ENCODE measurements at regions of chr3 and their contacts with region 1.

Region 1: DNA sequence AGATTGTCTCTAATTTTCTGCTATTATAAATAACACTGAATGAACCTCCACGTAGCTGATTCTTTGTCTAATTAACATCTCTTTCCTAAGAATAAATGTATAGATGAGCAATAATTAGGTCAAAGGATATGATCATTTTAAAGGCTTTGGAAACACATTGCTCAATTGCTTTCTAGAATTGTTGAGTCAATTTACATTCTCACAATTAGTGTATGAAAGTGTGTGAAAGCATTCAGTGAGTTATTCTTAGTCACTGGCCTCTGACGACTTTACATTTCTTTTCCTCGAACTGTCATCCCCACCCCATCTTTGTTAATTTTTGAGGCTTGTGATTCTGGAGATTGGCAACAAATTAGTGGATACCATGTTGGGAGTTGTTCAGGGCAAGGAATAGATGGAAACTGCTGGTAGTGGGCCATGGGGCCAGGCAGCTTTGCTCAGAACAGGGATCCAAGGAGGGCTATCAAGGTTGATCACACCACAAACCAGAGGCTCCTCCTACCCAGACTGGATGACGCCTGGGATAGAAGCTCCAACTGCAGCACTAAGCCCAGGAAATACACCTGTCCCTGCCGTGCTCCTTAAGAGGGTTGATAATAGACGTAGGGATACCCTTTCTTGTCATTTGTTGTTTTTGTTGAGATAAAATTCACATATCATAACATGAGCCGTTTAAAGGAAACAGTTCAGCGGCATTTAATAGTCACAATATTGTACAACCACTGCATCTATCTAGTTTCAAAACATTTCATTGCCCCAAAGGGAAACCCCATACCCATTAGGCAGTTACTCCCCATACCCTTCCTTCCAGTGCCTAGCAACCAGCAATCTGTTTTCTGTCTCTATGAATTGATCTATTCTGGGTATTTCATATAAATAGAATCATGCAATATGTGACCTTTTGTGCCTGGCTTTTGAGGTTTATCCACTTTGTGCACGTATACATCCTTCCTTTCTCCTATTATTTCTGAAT is 27.9 kb downstream of the EIF1B start:
- DNase-seq: no peak
- ATAC-seq: no peak
- H3K4me3 ChIP-seq: no peak overlapping the region
- H3K27ac ChIP-seq: no peak overlapping the region
- H3K4me1 ChIP-seq: no peaks in the 10 kb centered on the region
- H3K27me3 ChIP-seq: no peaks in the 10 kb centered on the region
- CTCF ChIP-seq: no peak
- POLR2A ChIP-seq: no peak
- RAD21 ChIP-seq: no peak

Region 2: DNA sequence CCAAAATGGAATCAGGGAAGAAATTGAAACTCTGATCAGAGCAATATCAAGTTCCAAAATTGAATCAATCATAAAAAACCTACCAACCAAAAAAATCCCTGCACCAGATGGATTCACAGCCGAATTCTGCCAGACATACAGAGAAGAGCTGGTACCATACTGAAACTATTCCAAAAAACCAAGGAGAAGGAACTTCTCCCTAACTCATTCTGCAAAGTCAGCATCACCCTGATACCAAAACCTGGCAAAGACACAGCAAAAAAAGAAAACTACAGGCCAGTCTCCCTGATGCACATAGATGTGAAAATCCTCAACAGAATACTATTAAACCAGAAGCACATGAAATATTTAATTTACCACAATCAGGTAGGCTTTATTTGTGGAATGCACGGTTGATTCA is 409.9 kb before region 1 on chr3:
- CTCF ChIA-PET with region 1: no interaction called
- POLR2A ChIA-PET with region 1: no interaction called
- RAD21 ChIA-PET with region 1: no interaction called
- intact Hi-C with region 1: no loop called
- DNase-seq: no peak
- ATAC-seq: no peak
- H3K4me3 ChIP-seq: no peak overlapping the region
- H3K27ac ChIP-seq: no peak overlapping the region
- H3K4me1 ChIP-seq: no peaks in the 10 kb centered on the region
- H3K27me3 ChIP-seq: 0 out of 2 replicates have a peak, but pooled peaks cover 4% of the 10 kb centered on the region
- CTCF ChIP-seq: no peak
- POLR2A ChIP-seq: no peak
- RAD21 ChIP-seq: no peak

Region 3: DNA sequence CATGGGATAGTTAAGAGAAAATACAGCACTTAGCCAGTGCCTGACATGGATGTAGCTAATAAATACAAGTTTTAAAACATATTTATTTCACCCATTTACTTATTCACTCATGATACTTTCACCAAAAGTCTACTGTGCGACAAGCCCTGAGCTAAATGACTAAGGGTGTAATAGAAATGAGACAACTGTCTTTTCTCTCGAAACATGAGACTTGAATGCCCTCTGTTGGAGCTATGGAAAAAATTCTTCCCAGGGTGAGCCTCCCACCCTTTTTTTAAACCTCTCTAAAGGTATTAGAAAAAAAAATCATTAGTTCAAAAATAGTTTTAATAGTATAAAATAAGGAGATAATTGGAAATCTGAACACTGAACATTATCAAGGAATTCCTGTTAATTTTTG is 95.4 kb after region 1 on chr3:
- CTCF ChIA-PET with region 1: no interaction called
- POLR2A ChIA-PET with region 1: no interaction called
- RAD21 ChIA-PET with region 1: no interaction called
- intact Hi-C with region 1: loop called (anchors 5 kb)
- DNase-seq: no peak
- ATAC-seq: no peak
- H3K4me3 ChIP-seq: no peak overlapping the region
- H3K27ac ChIP-seq: no peak overlapping the region
- H3K4me1 ChIP-seq: no peaks in the 10 kb centered on the region
- H3K27me3 ChIP-seq: no peaks in the 10 kb centered on the region
- CTCF ChIP-seq: peak in 1 of 3 experiments; percentile 20; a peak in 2 of 6 replicates
- POLR2A ChIP-seq: no peak
- RAD21 ChIP-seq: peak; percentile 51; the same call in 1 of the 2 replicates

Region 4: GRCh38 chr3:40546816-40547215 is 209.4 kb after region 1 on chr3:
- CTCF ChIA-PET with region 1: no interaction called
- POLR2A ChIA-PET with region 1: no interaction called
- RAD21 ChIA-PET with region 1: no interaction called
- intact Hi-C with region 1: loop called (anchors 5 kb)
- DNase-seq: no peak
- ATAC-seq: peak; percentile 67
- H3K4me3 ChIP-seq: no peak overlapping the region
- H3K27ac ChIP-seq: no peak overlapping the region
- H3K4me1 ChIP-seq: peaks cover 0 to 5% of the 10 kb centered on the region in 2 experiments; a peak in 1 of 4 replicates
- H3K27me3 ChIP-seq: no peaks in the 10 kb centered on the region
- CTCF ChIP-seq: no peak
- POLR2A ChIP-seq: no peak
- RAD21 ChIP-seq: no peak